Uterus (tissue), 4 donors: ENCODE measurements at regions of chr1 and their contacts with region 1.

Region 1: GRCh38 chr1:6489799-6490180 is 1.7 kb downstream of the PLEKHG5 start:
- DNase-seq: peak; percentile 42 to 58
- H3K4me3 ChIP-seq: peak overlapping the region; percentile 46 to 53
- H3K27ac ChIP-seq: peak overlapping the region in 1 of 2 donors; percentile 63
- H3K4me1 ChIP-seq: peaks cover 0 to 10% of the 10 kb centered on the region in 2 donors
- H3K27me3 ChIP-seq: no peaks in the 10 kb centered on the region
- CTCF ChIP-seq: peak; percentile 77 to 86 (median 81)
- POLR2A ChIP-seq: peak in 1 of 2 donors; percentile 15

Region 2: DNA sequence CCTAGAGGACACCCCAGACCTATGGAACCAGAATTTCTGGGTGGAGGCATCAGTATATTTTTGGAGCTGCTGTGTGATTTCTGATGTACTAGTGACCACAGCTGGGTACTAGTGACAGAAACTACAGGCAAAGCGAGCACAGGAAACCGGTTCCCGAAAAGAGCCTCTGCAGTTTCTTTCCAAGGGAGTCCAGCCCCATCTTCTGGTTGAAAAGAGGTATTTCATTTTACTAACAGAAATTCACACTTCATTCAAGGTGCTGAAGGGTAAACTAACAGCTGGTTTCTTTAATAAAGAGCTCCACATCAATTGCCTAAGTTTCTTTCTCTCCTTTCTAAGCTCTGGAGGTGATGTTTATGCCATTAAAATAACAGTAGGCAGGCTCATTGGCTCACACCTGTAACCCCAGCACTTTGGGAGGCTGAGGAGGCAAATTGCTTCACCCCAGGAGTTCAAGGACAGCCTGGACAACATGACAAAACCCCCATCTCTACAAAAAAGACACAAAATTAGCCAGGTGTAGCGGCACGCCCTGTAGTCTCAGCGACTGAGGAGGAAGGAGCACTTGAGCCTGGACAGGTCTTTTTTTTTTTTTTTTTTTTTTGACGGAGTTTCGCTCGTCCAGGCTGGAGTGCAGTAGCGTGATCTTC is 156.8 kb after region 1 on chr1:
- intact Hi-C with region 1: loop called (anchors 10 kb)
- DNase-seq: peak in 1 of 2 donors; percentile 39
- H3K4me3 ChIP-seq: no peak overlapping the region
- H3K27ac ChIP-seq: no peak overlapping the region
- H3K4me1 ChIP-seq: no peaks in the 10 kb centered on the region
- H3K27me3 ChIP-seq: no peaks in the 10 kb centered on the region
- CTCF ChIP-seq: peak; percentile 43 to 75 (median 66)
- POLR2A ChIP-seq: no peak